PC-9 (cell line): ENCODE measurements at regions of chr2 and their contacts with region 1.

Region 1: GRCh38 chr2:139031722-139032121 is 251.5 kb upstream of the NXPH2 start:
- DNase-seq: peak in 1 of 2 experiments; percentile 29
- H3K4me3 ChIP-seq: no peak overlapping the region
- H3K27ac ChIP-seq: no peak overlapping the region
- H3K4me1 ChIP-seq: no peaks in the 10 kb centered on the region
- H3K27me3 ChIP-seq: no peaks in the 10 kb centered on the region
- CTCF ChIP-seq: peak; percentile 22; the same call in 1 of the 2 replicates

Region 2: DNA sequence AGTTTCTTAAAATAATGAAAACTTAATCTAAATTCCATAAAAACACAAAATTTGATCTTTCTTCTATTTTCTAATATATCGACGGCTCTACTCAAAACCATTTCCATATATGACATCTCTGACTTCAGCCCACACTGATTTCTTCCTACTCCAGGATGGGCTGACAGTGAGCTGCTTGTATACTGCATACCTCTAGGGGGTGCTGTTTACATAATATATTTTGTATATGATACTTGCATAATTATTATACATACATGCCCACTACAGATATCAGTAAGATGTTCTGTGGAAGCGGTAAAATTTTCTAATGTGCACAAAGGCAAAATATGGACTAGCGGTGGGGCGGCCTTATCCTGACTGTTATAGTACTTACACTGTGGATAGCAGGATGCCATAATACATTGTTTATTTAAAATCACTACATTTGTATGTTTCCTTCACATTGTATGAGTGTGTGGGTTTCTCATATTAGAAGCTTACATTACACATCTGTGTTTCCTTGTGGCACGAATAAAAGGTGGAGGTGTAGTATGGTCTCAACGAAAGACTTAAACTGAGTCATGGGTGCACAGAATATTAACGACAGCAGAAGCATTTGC is 185.4 kb before region 1 on chr2:
- CTCF ChIA-PET with region 1: interaction called, 3 read pairs
- POLR2A ChIA-PET with region 1: no interaction called
- intact Hi-C with region 1: loop called (anchors 5 kb)
- DNase-seq: peak in 1 of 2 experiments; percentile 9
- H3K4me3 ChIP-seq: no peak overlapping the region
- H3K27ac ChIP-seq: no peak overlapping the region
- H3K4me1 ChIP-seq: no peaks in the 10 kb centered on the region
- H3K27me3 ChIP-seq: no peaks in the 10 kb centered on the region
- CTCF ChIP-seq: peak; percentile 82

Region 3: GRCh38 chr2:138893716-138894115 is 138.0 kb before region 1 on chr2:
- CTCF ChIA-PET with region 1: no interaction called
- POLR2A ChIA-PET with region 1: no interaction called
- intact Hi-C with region 1: no loop called
- DNase-seq: no peak
- H3K4me3 ChIP-seq: no peak overlapping the region
- H3K27ac ChIP-seq: no peak overlapping the region
- H3K4me1 ChIP-seq: no peaks in the 10 kb centered on the region
- H3K27me3 ChIP-seq: no peaks in the 10 kb centered on the region
- CTCF ChIP-seq: no peak

Region 4: DNA sequence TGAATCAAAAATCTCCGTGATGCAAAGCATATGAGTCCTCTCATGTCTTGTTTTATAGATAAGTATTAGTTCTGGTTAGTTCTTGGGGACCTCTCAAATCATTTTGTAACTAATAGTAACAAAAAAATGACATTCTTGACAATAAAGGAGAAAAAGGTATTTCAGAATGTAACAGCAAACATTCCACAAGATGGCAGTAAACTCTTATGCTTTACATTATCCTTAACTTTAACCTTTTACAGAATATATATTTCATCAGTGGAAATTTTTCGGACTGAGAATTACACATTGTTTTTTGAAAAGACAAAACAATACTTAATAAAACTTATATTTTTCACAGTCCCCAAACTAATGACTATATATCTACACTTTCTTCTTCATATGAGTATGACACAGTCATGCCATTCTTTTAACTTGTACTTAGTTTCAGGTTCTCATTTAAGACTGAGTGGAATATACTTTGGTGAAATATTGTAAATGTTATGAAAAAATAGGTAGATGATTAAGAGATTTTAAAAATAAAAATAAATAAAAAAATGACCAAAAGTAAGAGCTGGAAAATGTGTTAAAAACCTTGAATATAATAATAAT is 108.7 kb before region 1 on chr2:
- CTCF ChIA-PET with region 1: interaction called, 5 read pairs
- POLR2A ChIA-PET with region 1: no interaction called
- intact Hi-C with region 1: loop called (anchors 5 kb)
- DNase-seq: peak in 1 of 2 experiments; percentile 36
- H3K4me3 ChIP-seq: no peak overlapping the region
- H3K27ac ChIP-seq: no peak overlapping the region
- H3K4me1 ChIP-seq: no peaks in the 10 kb centered on the region
- H3K27me3 ChIP-seq: no peaks in the 10 kb centered on the region
- CTCF ChIP-seq: peak; percentile 71

Region 5: GRCh38 chr2:139045524-139045923 is 13.8 kb after region 1 on chr2:
- CTCF ChIA-PET with region 1: no interaction called
- POLR2A ChIA-PET with region 1: no interaction called
- intact Hi-C with region 1: no loop called
- DNase-seq: no peak
- H3K4me3 ChIP-seq: no peak overlapping the region
- H3K27ac ChIP-seq: no peak overlapping the region
- H3K4me1 ChIP-seq: no peaks in the 10 kb centered on the region
- H3K27me3 ChIP-seq: no peaks in the 10 kb centered on the region
- CTCF ChIP-seq: no peak